Natural killer cell (primary cell): ENCODE measurements at regions of chr19 and their contacts with region 1.

Region 1: GRCh38 chr19:3324321-3324856 is 42.0 kb upstream of the NFIC start:
- DNase-seq: peak; percentile 68 to 77
- ATAC-seq: peak; percentile 65 to 73 (median 68)
- H3K4me3 ChIP-seq: no peak overlapping the region
- H3K4me3 Mint-ChIP-seq: no peak overlapping the region
- H3K27ac ChIP-seq: no peak overlapping the region
- H3K27ac Mint-ChIP-seq: no peak overlapping the region
- H3K4me1 ChIP-seq: no peaks in the 10 kb centered on the region
- H3K4me1 Mint-ChIP-seq: no peaks in the 10 kb centered on the region
- H3K27me3 ChIP-seq: no peaks in the 10 kb centered on the region
- H3K27me3 Mint-ChIP-seq: peaks cover 13 to 21% of the 10 kb centered on the region in 2 donors
- CTCF ChIP-seq: peak; percentile 64

Region 2: GRCh38 chr19:3343619-3344502 is 19.5 kb after region 1 on chr19:
- intact Hi-C with region 1: no loop called
- DNase-seq: peak in 1 of 2 donors; percentile 71
- ATAC-seq: peak; percentile 74 to 83 (median 75)
- H3K4me3 ChIP-seq: peak overlapping the region; percentile 24
- H3K4me3 Mint-ChIP-seq: no peak overlapping the region
- H3K27ac ChIP-seq: no peak overlapping the region
- H3K27ac Mint-ChIP-seq: no peak overlapping the region
- H3K4me1 ChIP-seq: peaks cover 15% of the 10 kb centered on the region
- H3K4me1 Mint-ChIP-seq: peaks cover 1 to 2% of the 10 kb centered on the region in 2 donors
- H3K27me3 ChIP-seq: no peaks in the 10 kb centered on the region
- H3K27me3 Mint-ChIP-seq: no peaks in the 10 kb centered on the region
- CTCF ChIP-seq: no peak

Region 3: DNA sequence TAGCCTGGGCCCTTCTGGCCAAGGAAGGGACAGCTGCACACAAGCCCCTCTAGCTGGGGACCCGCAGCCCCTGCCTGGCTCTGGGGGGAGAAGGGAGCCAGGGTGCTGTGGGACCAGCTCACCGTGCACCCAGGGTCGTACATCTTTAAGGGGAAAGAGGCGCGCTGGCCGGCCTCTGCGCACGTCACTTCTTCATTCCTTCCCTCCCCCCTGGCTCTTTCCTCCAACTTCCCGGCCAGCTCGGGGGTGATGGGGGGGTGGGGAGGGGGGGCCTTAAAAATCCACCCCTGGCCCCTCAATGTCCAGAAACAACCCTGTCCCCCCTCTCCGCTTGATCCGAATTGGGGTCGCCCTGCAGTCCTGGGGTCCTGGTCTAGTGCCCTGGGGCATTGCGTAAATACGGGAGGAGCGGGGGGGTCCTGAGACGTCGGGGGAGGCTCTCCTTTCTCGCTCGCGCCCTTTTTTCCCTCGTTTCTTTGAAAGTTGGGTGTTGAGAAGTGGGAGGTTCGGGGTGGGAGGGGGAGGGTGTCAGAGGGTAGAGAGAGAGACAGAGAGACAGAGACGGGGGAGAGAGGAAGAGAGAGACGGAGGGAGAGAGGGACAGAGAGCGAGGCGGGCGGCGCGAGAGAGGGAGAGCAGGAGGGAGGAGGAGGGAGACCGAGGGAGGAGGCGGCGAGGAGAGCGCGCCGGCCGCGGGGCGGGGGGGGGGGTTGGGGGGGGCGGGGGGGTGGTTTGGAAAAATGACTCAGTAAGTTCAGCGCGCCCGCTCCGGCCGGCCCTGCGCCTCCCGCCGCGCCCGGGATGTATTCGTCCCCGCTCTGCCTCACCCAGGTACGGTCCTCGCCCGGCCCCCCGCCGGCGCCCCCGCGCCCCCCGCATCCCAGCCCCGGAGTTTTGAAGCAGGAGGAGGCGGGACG is 41.7 kb after region 1 on chr19 and contains the start of gene NFIC:
- intact Hi-C with region 1: no loop called
- DNase-seq: peak; percentile 27 to 59
- ATAC-seq: peak; percentile 44 to 62 (median 56)
- H3K4me3 ChIP-seq: peak within 1 kb of the TSS; percentile 30
- H3K4me3 Mint-ChIP-seq: peak within 1 kb of the TSS; percentile 75
- H3K27ac ChIP-seq: no peak within 1 kb of the TSS
- H3K27ac Mint-ChIP-seq: peak within 1 kb of the TSS in 1 of 2 donors; percentile 52
- H3K4me1 ChIP-seq: peaks cover 52% of the 10 kb centered on the region
- H3K4me1 Mint-ChIP-seq: peaks cover 13 to 56% of the 10 kb centered on the region in 2 donors
- H3K27me3 ChIP-seq: peaks cover 7% of the 10 kb centered on the region
- H3K27me3 Mint-ChIP-seq: peaks cover 0 to 24% of the 10 kb centered on the region in 2 donors
- CTCF ChIP-seq: no peak
- total RNA-seq, gene NFIC: 18.5 to 22.2 (median 20.6) TPM

Region 4: GRCh38 chr19:3429581-3430080 is 105.2 kb after region 1 on chr19:
- intact Hi-C with region 1: loop called (anchors 1 kb)
- DNase-seq: peak; percentile 78 to 84
- ATAC-seq: peak; percentile 84 to 96 (median 90)
- H3K4me3 ChIP-seq: no peak overlapping the region
- H3K4me3 Mint-ChIP-seq: no peak overlapping the region
- H3K27ac ChIP-seq: no peak overlapping the region
- H3K27ac Mint-ChIP-seq: no peak overlapping the region
- H3K4me1 ChIP-seq: peaks cover 18% of the 10 kb centered on the region
- H3K4me1 Mint-ChIP-seq: peaks cover 0 to 16% of the 10 kb centered on the region in 2 donors
- H3K27me3 ChIP-seq: no peaks in the 10 kb centered on the region
- H3K27me3 Mint-ChIP-seq: no peaks in the 10 kb centered on the region
- CTCF ChIP-seq: peak; percentile 95

Region 5: GRCh38 chr19:3479834-3480215 is 155.4 kb after region 1 on chr19:
- intact Hi-C with region 1: loop called (anchors 1 kb)
- DNase-seq: peak; percentile 29 to 57
- ATAC-seq: peak; percentile 58 to 70 (median 66)
- H3K4me3 ChIP-seq: no peak overlapping the region
- H3K4me3 Mint-ChIP-seq: peak overlapping the region; percentile 87
- H3K27ac ChIP-seq: no peak overlapping the region
- H3K27ac Mint-ChIP-seq: peak overlapping the region in 1 of 2 donors; percentile 64
- H3K4me1 ChIP-seq: peaks cover 25% of the 10 kb centered on the region
- H3K4me1 Mint-ChIP-seq: peaks cover 13 to 25% of the 10 kb centered on the region in 2 donors
- H3K27me3 ChIP-seq: no peaks in the 10 kb centered on the region
- H3K27me3 Mint-ChIP-seq: no peaks in the 10 kb centered on the region
- CTCF ChIP-seq: no peak